Breast epithelium (tissue), 4 donors: ENCODE measurements at regions of chr4 and their contacts with region 1.

Region 1: GRCh38 chr4:145230726-145231125 is 50.3 kb upstream of the OTUD4 start:
- DNase-seq: no peak
- H3K4me3 ChIP-seq: no peak overlapping the region
- H3K27ac ChIP-seq: no peak overlapping the region
- H3K4me1 ChIP-seq: no peaks in the 10 kb centered on the region
- H3K27me3 ChIP-seq: no peaks in the 10 kb centered on the region
- CTCF ChIP-seq: no peak
- POLR2A ChIP-seq: no peak

Region 2: DNA sequence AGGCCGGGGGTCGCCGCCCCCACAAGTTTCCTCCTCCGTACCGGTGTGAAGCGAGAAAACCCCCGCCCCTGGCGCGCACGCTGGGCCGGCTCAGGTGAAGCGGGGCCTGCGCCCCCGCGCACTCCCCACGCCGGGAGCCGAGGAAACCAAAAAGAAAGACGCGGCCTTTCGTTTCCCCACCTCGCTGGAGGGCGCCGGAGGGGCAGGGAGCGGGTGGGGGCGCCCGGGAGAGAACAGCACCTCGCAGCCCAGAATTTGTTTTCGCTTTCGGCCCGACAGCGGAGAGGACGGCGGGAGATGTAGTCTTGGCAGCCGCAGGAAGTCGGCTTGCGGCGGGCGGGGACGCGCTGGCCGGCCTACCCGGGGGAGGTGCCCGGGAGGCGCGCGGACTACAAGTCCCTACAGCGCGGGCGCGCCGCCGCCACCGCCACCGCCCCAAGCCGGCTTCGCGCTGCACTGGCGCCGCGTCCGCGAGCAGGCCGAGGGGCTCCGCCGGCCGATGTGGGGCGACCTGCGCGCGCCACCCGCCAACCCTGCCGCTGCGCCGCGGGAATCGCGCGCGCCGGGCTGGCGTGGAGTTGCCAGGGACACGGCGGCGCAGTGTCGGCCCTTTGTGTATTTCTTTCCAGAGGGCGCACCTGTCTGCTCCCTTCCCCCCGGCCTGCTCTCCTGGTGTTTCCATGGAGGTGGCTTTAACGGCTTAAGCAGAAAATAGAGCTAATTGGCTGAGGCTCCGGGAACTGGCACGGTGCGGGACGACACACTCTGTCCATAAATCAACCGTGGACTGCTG is 50.2 kb before region 1 on chr4 and contains the start of gene OTUD4:
- intact Hi-C with region 1: no loop called
- DNase-seq: peak; percentile 91 to 95
- H3K4me3 ChIP-seq: peak within 1 kb of the TSS; percentile 66 to 88 (median 82)
- H3K27ac ChIP-seq: peak within 1 kb of the TSS; percentile 96 to 98
- H3K4me1 ChIP-seq: peaks cover 0 to 11% of the 10 kb centered on the region in 2 donors
- H3K27me3 ChIP-seq: no peaks in the 10 kb centered on the region
- CTCF ChIP-seq: peak in 2 of 3 donors; percentile 9 to 18
- POLR2A ChIP-seq: peak; percentile 39
- total RNA-seq, gene OTUD4: 22.9 to 55.8 (median 35.7) TPM

Region 3: GRCh38 chr4:145216535-145216934 is 14.2 kb before region 1 on chr4:
- intact Hi-C with region 1: loop called (anchors 2 kb)
- DNase-seq: no peak
- H3K4me3 ChIP-seq: no peak overlapping the region
- H3K27ac ChIP-seq: no peak overlapping the region
- H3K4me1 ChIP-seq: no peaks in the 10 kb centered on the region
- H3K27me3 ChIP-seq: no peaks in the 10 kb centered on the region
- CTCF ChIP-seq: peak in 2 of 3 donors; percentile 34 to 38
- POLR2A ChIP-seq: no peak